Mammary epithelial cell (primary cell): ENCODE measurements at regions of chr5 and their contacts with region 1.

Region 1: DNA sequence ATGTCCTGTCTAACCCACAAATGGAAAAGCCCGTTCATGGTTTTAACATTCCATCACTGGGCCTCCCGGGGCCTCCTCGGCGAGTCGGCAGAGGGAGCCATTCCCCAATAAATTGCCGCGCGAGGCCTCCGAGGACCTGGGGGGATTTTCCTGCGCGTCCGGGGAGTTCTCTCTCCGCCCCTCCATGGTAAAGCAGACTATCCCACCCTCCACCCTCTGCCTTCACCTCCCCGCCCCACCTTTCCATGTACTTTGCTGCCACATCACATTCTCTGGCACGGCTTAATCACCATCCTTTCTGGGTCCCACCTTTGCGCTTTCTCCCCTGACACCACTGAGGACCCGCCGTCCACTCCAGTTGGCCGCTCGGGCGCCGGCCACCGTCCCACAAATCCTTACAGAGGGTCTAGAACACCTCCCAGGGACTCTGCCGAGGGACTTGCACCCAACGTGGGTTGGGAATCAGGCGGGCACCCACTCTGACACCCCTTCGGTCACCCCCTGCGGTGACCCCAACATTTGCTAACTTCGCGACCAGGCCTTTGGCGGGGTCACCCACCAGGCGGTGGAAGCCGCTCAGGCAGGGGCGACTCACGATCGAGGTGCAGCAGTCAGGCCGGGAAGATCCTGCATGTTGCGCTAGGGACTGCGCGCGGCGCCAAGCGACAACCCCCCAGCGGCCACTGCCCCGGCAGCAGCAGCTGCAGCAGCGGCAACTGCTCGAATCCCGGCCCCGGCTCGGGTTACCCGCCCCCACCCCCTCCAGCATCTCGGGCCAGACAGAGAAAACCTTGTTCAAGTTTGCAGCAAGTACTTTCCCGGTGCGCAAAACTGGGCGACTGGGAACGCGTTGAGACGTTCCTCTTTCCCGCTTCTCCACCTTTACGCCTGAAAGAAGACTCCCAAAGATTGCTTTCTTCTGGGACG is at the start of gene MEGF10:
- DNase-seq: peak; percentile 46
- H3K4me3 ChIP-seq: peak within 1 kb of the TSS in 2 of 3 experiments; percentile 17 to 19
- H3K27ac ChIP-seq: no peak within 1 kb of the TSS
- H3K4me1 ChIP-seq: peaks cover 7% of the 10 kb centered on the region
- H3K27me3 ChIP-seq: peaks cover 14% of the 10 kb centered on the region
- CTCF ChIP-seq: peak; percentile 57 to 86
- total RNA-seq, gene MEGF10: 0.40 to 2.2 TPM

Region 2: GRCh38 chr5:126837906-126838539 is 452.3 kb before region 1 on chr5:
- CTCF ChIA-PET with region 1: no interaction called
- dilution Hi-C with region 1: no loop called
- in situ Hi-C with region 1: no loop called
- intact Hi-C with region 1: loop called (anchors 5 kb)
- DNase-seq: no peak
- H3K4me3 ChIP-seq: no peak overlapping the region
- H3K27ac ChIP-seq: no peak overlapping the region
- H3K4me1 ChIP-seq: no peaks in the 10 kb centered on the region
- H3K27me3 ChIP-seq: no peaks in the 10 kb centered on the region
- CTCF ChIP-seq: peak in 1 of 2 donors; percentile 37

Region 3: DNA sequence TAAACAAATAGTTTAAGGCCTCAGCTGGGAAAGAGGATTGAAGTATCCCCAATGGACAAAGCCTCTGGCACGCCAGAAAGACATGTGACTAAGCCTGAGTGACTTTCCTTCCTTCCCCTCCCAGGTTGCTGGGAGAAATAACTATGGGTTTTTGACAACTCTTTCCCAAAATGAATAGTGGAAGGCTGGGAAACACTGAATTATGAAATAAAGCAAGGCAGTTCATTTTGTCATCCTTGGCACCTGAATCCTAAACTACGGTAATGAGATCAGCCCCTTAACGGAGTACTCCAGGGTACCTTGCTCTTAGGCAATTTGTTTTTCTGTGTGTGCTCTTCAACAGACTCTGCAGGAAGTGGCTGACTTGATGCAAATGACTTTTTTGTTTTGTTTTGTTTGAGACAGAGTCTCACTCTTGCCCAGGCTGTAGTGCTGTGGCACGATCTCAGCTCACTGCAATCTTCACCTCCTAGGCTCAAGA is 438.2 kb before region 1 on chr5:
- CTCF ChIA-PET with region 1: no interaction called
- dilution Hi-C with region 1: no loop called
- in situ Hi-C with region 1: loop called in 1 of 2 experiments (anchors 10 kb)
- intact Hi-C with region 1: no loop called
- DNase-seq: no peak
- H3K4me3 ChIP-seq: no peak overlapping the region
- H3K27ac ChIP-seq: no peak overlapping the region
- H3K4me1 ChIP-seq: no peaks in the 10 kb centered on the region
- H3K27me3 ChIP-seq: no peaks in the 10 kb centered on the region
- CTCF ChIP-seq: no peak

Region 4: DNA sequence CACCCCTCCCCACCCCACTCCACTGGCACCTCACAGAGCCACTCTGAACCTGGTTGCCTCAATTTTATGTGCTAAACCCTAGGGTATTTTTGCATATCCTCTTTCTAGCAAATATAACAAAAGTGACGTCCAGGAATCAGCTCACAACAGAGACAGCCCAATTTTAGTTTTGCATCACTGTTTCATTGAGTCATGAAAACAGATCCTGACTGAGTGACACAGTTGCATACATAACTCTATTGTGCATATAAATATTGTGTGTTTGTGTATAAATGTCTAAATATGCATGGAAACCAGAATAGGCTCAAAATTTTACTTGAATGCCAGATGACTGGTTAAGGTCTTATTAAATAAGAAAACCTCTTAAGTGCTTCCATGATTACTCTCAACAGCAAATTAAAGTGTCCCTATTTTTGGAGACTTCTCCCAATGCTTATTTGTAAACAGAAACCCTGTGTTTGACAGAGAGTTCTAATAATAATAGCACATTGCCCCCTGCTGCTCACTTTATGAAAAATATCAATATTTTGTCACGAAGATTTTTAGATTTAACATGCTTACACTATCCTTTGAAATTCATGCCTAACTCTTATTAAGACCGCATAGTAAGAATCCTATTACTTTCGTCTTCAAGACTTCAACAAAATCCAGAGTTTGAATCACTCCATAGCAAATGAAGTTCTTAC is 151.7 kb after region 1 on chr5:
- CTCF ChIA-PET with region 1: no interaction called
- dilution Hi-C with region 1: no loop called
- in situ Hi-C with region 1: no loop called
- intact Hi-C with region 1: loop called (anchors 1 kb)
- DNase-seq: peak; percentile 4
- H3K4me3 ChIP-seq: no peak overlapping the region
- H3K27ac ChIP-seq: no peak overlapping the region
- H3K4me1 ChIP-seq: no peaks in the 10 kb centered on the region
- H3K27me3 ChIP-seq: peaks cover 8% of the 10 kb centered on the region
- CTCF ChIP-seq: peak; percentile 17 to 35

Region 5: GRCh38 chr5:127492854-127493738 is 202.8 kb after region 1 on chr5:
- CTCF ChIA-PET with region 1: no interaction called
- dilution Hi-C with region 1: no loop called
- in situ Hi-C with region 1: no loop called
- intact Hi-C with region 1: loop called (anchors 1 kb)
- DNase-seq: peak; percentile 33
- H3K4me3 ChIP-seq: no peak overlapping the region
- H3K27ac ChIP-seq: no peak overlapping the region
- H3K4me1 ChIP-seq: no peaks in the 10 kb centered on the region
- H3K27me3 ChIP-seq: peaks cover 8% of the 10 kb centered on the region
- CTCF ChIP-seq: peak; percentile 65 to 75